HEK293 (cell line): ENCODE measurements at regions of chr4 and their contacts with region 1.

Region 1: GRCh38 chr4:56410235-56411062 is 23.2 kb upstream of the AASDH start:
- H3K4me3 ChIP-seq: peak overlapping the region; percentile 20
- H3K27ac ChIP-seq: no peak overlapping the region; the same call in 1 of the 2 replicates
- H3K4me1 ChIP-seq: peaks cover 4% of the 10 kb centered on the region
- CTCF ChIP-seq: no peak

Region 2: DNA sequence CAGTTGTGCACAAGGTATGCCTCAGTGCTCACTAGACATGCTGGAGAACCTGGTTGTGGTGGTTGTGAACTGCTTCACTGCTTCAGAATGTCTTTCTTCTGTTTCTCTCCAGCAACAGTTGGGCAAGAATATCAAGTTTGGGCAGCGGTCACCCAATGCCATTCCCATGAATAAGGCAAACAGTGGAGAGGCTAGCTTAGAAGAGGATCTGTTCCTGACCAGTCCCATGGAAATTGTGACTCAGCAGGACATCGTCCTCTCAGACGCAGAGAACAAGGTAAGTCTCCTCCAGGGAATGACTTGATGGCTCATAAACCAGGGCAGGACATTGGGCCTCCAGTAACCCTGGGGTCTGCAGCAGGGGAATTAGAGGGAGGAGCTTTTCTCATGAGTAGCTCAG is 103.0 kb before region 1 on chr4:
- CTCF ChIA-PET with region 1: no interaction called
- POLR2A ChIA-PET with region 1: no interaction called
- H3K4me3 ChIP-seq: no peak overlapping the region
- H3K27ac ChIP-seq: no peak overlapping the region
- H3K4me1 ChIP-seq: no peaks in the 10 kb centered on the region
- CTCF ChIP-seq: no peak

Region 3: GRCh38 chr4:56387023-56388001 is 23.1 kb before region 1 on chr4 and contains the start of gene AASDH:
- CTCF ChIA-PET with region 1: no interaction called
- POLR2A ChIA-PET with region 1: interaction called, 12 read pairs
- H3K4me3 ChIP-seq: peak within 1 kb of the TSS; percentile 80
- H3K27ac ChIP-seq: peak within 1 kb of the TSS; percentile 74
- H3K4me1 ChIP-seq: no peaks in the 10 kb centered on the region
- CTCF ChIP-seq: no peak

Region 4: GRCh38 chr4:56791316-56791715 is 380.9 kb after region 1 on chr4:
- CTCF ChIA-PET with region 1: no interaction called
- POLR2A ChIA-PET with region 1: no interaction called
- H3K4me3 ChIP-seq: no peak overlapping the region
- H3K27ac ChIP-seq: no peak overlapping the region
- H3K4me1 ChIP-seq: peaks cover 5% of the 10 kb centered on the region
- CTCF ChIP-seq: no peak